HEK293 (cell line): ENCODE measurements at regions of chr6 and their contacts with region 1.

Region 1: GRCh38 chr6:30914076-30914853 is at the start of gene VARS2:
- H3K4me3 ChIP-seq: peak within 1 kb of the TSS; percentile 45
- H3K27ac ChIP-seq: peak within 1 kb of the TSS; percentile 85
- H3K4me1 ChIP-seq: peaks cover 6% of the 10 kb centered on the region
- CTCF ChIP-seq: peak; percentile 70

Region 2: DNA sequence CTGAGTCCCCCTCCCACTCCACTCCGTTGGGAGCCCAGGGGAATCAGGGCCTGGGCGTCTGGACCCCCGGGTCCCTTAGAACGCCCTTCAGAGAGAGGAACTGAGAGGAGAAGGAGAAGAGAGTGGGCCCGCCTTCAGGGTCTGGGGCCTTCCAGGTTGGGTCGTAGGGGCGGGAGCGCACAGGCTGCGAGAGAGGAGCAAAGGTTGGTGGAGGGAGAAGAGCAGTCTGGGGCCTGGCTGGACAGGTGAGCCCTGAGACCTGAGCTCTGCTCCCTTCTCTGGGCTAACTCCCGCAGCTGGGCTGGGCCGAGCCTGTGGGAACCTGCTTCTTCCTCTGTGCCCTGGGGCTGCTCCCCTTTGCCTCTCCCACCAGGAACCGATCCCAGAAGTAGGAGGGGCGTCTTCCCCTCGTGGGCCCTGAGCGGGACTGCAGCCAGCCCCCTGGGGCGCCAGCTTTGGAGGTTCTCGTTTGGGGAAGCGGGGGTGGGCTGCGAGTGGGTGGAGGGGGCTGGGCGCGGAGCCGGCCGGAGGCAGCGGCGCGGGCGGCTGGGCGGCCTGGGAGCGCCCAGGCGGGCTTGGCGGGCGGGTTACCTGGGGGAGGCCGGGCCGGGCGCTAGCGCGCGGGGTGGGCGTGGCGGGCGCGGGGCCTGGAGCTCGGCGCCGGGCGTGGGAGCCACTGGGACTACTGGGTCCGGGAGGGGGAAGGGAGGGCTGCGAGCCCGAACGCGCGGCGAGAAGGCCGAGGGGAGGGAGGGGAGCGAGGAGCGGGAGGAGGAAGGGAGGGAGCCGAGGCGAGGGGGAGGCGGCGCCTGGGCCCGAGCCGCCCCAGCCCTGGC is 30.4 kb before region 1 on chr6 and contains the start of gene DDR1:
- CTCF ChIA-PET with region 1: interaction called, 6 read pairs
- POLR2A ChIA-PET with region 1: interaction called, 24 read pairs
- H3K4me3 ChIP-seq: peak within 1 kb of the TSS; percentile 47
- H3K27ac ChIP-seq: peak within 1 kb of the TSS; percentile 69
- H3K4me1 ChIP-seq: peaks cover 35% of the 10 kb centered on the region
- CTCF ChIP-seq: no peak

Region 3: DNA sequence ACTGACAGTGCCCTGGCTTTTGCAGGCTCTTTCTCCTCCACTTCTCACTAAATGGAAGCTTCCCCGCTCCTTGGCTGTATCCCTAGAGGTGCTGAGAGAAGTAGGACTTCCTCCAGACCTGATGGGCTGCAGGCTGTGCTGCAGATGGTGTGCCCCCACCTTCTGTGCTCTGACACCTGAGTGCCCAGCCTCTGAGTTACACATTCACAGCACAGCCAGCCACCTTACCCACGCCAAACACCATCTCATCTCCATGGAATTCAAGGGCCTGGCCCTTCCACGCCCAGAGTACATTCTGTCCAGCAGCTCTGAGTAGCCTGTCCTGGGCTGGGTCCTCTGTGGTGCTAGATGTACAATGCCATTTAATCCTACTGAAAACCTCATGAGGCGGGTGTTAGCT is 12.4 kb after region 1 on chr6:
- CTCF ChIA-PET with region 1: interaction called, 15 read pairs
- POLR2A ChIA-PET with region 1: interaction called, 5 read pairs
- H3K4me3 ChIP-seq: no peak overlapping the region
- H3K27ac ChIP-seq: no peak overlapping the region
- H3K4me1 ChIP-seq: no peaks in the 10 kb centered on the region
- CTCF ChIP-seq: no peak

Region 4: DNA sequence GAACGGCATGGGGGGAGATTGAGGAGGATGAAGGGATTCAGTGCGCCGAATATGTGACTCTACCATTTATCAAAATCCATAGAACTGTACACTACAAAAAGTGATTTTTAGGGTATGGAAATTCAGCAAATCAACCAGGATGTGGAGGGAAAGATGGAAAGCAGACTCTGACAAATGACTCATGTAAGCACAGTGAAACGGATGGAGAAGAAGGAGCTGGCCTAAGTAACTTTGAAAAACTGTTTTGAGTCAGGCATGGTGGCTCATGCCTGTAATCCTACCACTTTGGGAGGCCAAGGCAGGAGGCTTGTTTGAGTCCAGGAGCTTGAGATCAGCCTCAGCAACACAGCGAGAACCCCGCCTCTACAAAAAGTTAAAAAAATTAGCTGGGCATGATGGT is 135.3 kb after region 1 on chr6:
- CTCF ChIA-PET with region 1: interaction called, 18 read pairs
- POLR2A ChIA-PET with region 1: no interaction called
- H3K4me3 ChIP-seq: no peak overlapping the region
- H3K27ac ChIP-seq: no peak overlapping the region
- H3K4me1 ChIP-seq: no peaks in the 10 kb centered on the region
- CTCF ChIP-seq: no peak